BJ (cell line): ENCODE measurements at regions of chr3 and their contacts with region 1.

Region 1: GRCh38 chr3:16600780-16601539 is 4.3 kb downstream of the DAZL start:
- DNase-seq: peak; percentile 15
- H3K4me3 ChIP-seq: no peak overlapping the region
- H3K27me3 ChIP-seq: no peaks in the 10 kb centered on the region; the same call in 1 of the 2 replicates
- CTCF ChIP-seq: peak; percentile 72

Region 2: DNA sequence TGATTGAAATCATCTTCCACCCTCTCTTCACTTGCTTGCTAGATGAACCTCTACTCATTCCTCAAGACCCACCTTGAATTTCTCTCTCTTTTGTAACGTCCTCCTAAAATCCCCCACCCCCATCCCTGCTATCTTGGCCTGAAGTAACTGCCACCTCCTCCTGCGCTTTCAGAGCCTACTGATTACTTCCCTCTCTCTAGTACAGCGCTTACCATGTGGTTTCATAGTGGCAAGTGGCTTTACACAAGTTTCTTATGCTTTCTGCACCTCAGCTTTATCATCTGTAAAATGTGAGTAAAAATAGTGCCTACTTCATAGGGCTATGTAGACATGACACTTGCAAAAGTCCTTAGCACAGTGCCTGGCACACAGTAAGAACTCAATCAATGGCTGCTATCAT is 33.0 kb after region 1 on chr3:
- CTCF ChIA-PET with region 1: no interaction called
- POLR2A ChIA-PET with region 1: no interaction called
- DNase-seq: no peak
- H3K4me3 ChIP-seq: no peak overlapping the region
- H3K27me3 ChIP-seq: no peaks in the 10 kb centered on the region
- CTCF ChIP-seq: no peak

Region 3: DNA sequence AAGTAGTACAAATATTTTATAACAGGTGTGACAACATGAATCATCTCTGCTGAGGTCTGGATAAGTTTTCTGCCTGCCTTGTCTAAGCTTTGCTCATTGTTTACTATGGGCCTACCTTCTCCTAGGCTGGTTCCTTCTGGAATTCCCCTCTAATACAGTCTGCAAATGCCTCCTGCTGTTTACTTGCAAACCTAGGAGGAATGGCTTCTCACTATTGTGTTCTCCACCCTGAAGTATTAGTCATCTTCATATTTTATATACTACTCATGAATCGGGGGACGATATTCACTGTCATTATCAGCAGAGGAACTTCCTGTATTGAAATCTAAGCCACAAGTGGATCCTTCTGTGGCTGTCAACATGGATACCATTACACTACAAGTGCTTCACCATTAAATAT is 438.6 kb after region 1 on chr3:
- CTCF ChIA-PET with region 1: interaction called, 10 read pairs
- POLR2A ChIA-PET with region 1: no interaction called
- DNase-seq: peak; percentile 79
- H3K4me3 ChIP-seq: no peak overlapping the region
- H3K27me3 ChIP-seq: no peaks in the 10 kb centered on the region
- CTCF ChIP-seq: peak; percentile 19; the same call in 1 of the 2 replicates

Region 4: GRCh38 chr3:17231537-17232261 is 630.7 kb after region 1 on chr3:
- CTCF ChIA-PET with region 1: interaction called, 10 read pairs
- POLR2A ChIA-PET with region 1: no interaction called
- DNase-seq: no peak
- H3K4me3 ChIP-seq: no peak overlapping the region
- H3K27me3 ChIP-seq: no peaks in the 10 kb centered on the region
- CTCF ChIP-seq: no peak

Region 5: GRCh38 chr3:17412950-17413530 is 812.1 kb after region 1 on chr3:
- CTCF ChIA-PET with region 1: interaction called, 14 read pairs
- POLR2A ChIA-PET with region 1: no interaction called
- DNase-seq: no peak
- H3K4me3 ChIP-seq: no peak overlapping the region
- H3K27me3 ChIP-seq: no peaks in the 10 kb centered on the region
- CTCF ChIP-seq: peak; percentile 77